ENCODE measurements at regions of chr4 and their contacts with region 1.

Region 1: GRCh38 chr4:186191200-186192065 is at the start of gene CYP4V2:
- DNase-seq: peak; percentile 85 to 93 (median 90)
- H3K4me3 ChIP-seq: peak within 1 kb of the TSS; percentile 79
- H3K4me3 Mint-ChIP-seq: peak within 1 kb of the TSS; percentile 92 to 97 (median 95)
- H3K27ac ChIP-seq: peak within 1 kb of the TSS; percentile 90
- H3K27ac Mint-ChIP-seq: peak within 1 kb of the TSS; percentile 96 to 98 (median 97)
- H3K4me1 ChIP-seq: peaks cover 36% of the 10 kb centered on the region
- H3K4me1 Mint-ChIP-seq: peaks cover 30 to 57% (median 42%) of the 10 kb centered on the region in 4 donors
- H3K27me3 ChIP-seq: no peaks in the 10 kb centered on the region
- H3K27me3 Mint-ChIP-seq: no peaks in the 10 kb centered on the region
- total RNA-seq, gene CYP4V2: 41.9 to 45.5 TPM

Region 2: GRCh38 chr4:185950891-185951290 is 240.5 kb before region 1 on chr4:
- CTCF ChIA-PET with region 1: no interaction called
- POLR2A ChIA-PET with region 1: no interaction called
- intact Hi-C with region 1: no loop called
- DNase-seq: no peak
- H3K4me3 ChIP-seq: no peak overlapping the region
- H3K4me3 Mint-ChIP-seq: no peak overlapping the region
- H3K27ac ChIP-seq: no peak overlapping the region
- H3K27ac Mint-ChIP-seq: no peak overlapping the region
- H3K4me1 ChIP-seq: no peaks in the 10 kb centered on the region
- H3K4me1 Mint-ChIP-seq: no peaks in the 10 kb centered on the region
- H3K27me3 ChIP-seq: no peaks in the 10 kb centered on the region
- H3K27me3 Mint-ChIP-seq: peaks cover 9 to 11% of the 10 kb centered on the region in 2 donors

Region 3: GRCh38 chr4:186144142-186144955 is 47.1 kb before region 1 on chr4:
- CTCF ChIA-PET with region 1: no interaction called
- POLR2A ChIA-PET with region 1: no interaction called
- intact Hi-C with region 1: loop called (anchors 5 kb)
- DNase-seq: no peak
- H3K4me3 ChIP-seq: no peak overlapping the region
- H3K4me3 Mint-ChIP-seq: peak overlapping the region; percentile 49 to 83 (median 74)
- H3K27ac ChIP-seq: no peak overlapping the region
- H3K27ac Mint-ChIP-seq: peak overlapping the region in 1 of 7 donors; percentile 21
- H3K4me1 ChIP-seq: peaks cover 5% of the 10 kb centered on the region
- H3K4me1 Mint-ChIP-seq: peaks cover 2 to 17% (median 15%) of the 10 kb centered on the region in 4 donors
- H3K27me3 ChIP-seq: peaks cover 25% of the 10 kb centered on the region
- H3K27me3 Mint-ChIP-seq: peaks cover 37 to 47% of the 10 kb centered on the region in 2 donors

Region 4: DNA sequence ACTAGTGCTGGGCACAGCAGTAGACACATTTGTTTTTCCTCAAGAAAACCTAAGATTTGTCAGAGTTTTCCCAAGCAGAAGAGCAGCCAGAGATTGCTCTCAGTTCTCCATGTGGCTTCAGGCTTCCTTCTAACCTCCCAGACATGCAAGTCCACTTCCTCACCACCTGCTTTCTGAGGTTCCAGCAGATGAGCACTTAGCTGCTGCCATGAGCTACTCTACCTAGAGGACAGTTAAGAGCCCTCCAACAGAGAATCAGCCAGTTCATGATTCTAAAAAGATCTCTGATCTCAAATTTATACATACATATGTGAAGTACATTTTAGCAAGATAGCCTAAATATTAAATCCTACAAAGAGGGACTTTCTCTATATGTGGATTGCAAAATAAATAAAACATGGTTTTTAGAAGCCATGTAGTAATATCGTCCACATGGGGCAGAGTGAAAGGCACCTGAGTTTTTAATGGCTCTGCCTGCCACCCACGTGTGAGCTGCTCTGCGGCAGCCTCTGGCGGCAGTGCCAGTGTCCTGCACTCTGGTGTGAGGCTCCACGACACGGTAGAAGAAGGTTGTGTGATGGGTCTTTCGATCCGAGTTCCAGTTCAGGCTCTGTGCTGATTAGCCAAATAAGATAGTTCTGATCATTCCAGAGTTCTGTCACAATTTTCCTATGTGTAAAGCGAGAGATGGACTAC is 10.2 kb after region 1 on chr4:
- CTCF ChIA-PET with region 1: interaction called, 45 read pairs
- POLR2A ChIA-PET with region 1: interaction called, 131 read pairs
- intact Hi-C with region 1: loop called (anchors 1 kb)
- DNase-seq: peak; percentile 41 to 77 (median 53)
- H3K4me3 ChIP-seq: no peak overlapping the region
- H3K4me3 Mint-ChIP-seq: peak overlapping the region in 7 of 8 donors; percentile 2 to 65 (median 30)
- H3K27ac ChIP-seq: no peak overlapping the region
- H3K27ac Mint-ChIP-seq: peak overlapping the region; percentile 19 to 94 (median 79)
- H3K4me1 ChIP-seq: no peaks in the 10 kb centered on the region
- H3K4me1 Mint-ChIP-seq: peaks cover 16 to 52% (median 25%) of the 10 kb centered on the region in 4 donors
- H3K27me3 ChIP-seq: no peaks in the 10 kb centered on the region
- H3K27me3 Mint-ChIP-seq: no peaks in the 10 kb centered on the region

Region 5: GRCh38 chr4:186227221-186227620 is 35.8 kb after region 1 on chr4 and contains the start of gene KLKB1:
- CTCF ChIA-PET with region 1: no interaction called
- POLR2A ChIA-PET with region 1: no interaction called
- intact Hi-C with region 1: no loop called
- DNase-seq: no peak
- H3K4me3 ChIP-seq: no peak within 1 kb of the TSS
- H3K4me3 Mint-ChIP-seq: no peak within 1 kb of the TSS
- H3K27ac ChIP-seq: no peak within 1 kb of the TSS
- H3K27ac Mint-ChIP-seq: no peak within 1 kb of the TSS
- H3K4me1 ChIP-seq: no peaks in the 10 kb centered on the region
- H3K4me1 Mint-ChIP-seq: no peaks in the 10 kb centered on the region
- H3K27me3 ChIP-seq: no peaks in the 10 kb centered on the region
- H3K27me3 Mint-ChIP-seq: peaks cover 0 to 5% of the 10 kb centered on the region in 2 donors
- total RNA-seq, gene KLKB1: 1.2 to 1.4 TPM

Measured in CD4-positive, alpha-beta memory T cell (primary cell).